Thyroid gland (tissue), 4 donors: ENCODE measurements at regions of chr6 and their contacts with region 1.

Region 1: GRCh38 chr6:161418463-161418945 is 144.6 kb upstream of the AGPAT4 start:
- DNase-seq: peak in 1 of 2 donors; percentile 41
- H3K4me3 ChIP-seq: no peak overlapping the region
- H3K27ac ChIP-seq: no peak overlapping the region
- H3K4me1 ChIP-seq: no peaks in the 10 kb centered on the region
- H3K27me3 ChIP-seq: no peaks in the 10 kb centered on the region
- CTCF ChIP-seq: peak; percentile 34 to 86 (median 63)
- POLR2A ChIP-seq: no peak

Region 2: GRCh38 chr6:161694995-161695394 is 276.5 kb after region 1 on chr6:
- intact Hi-C with region 1: loop called (anchors 10 kb)
- DNase-seq: no peak
- H3K4me3 ChIP-seq: no peak overlapping the region
- H3K27ac ChIP-seq: no peak overlapping the region
- H3K4me1 ChIP-seq: no peaks in the 10 kb centered on the region
- H3K27me3 ChIP-seq: no peaks in the 10 kb centered on the region
- CTCF ChIP-seq: peak in 3 of 6 experiments; percentile 29 to 45 (median 37)
- POLR2A ChIP-seq: no peak